Activated CD8-positive, alpha-beta memory T cell treated with anti-CD3 and anti-CD28 coated beads, Interleukin-2, amount 10 ng/mL, durations not matched to agents 7 days and 5 days (primary cell): ENCODE measurements at regions of chr9 and their contacts with region 1.

Region 1: DNA sequence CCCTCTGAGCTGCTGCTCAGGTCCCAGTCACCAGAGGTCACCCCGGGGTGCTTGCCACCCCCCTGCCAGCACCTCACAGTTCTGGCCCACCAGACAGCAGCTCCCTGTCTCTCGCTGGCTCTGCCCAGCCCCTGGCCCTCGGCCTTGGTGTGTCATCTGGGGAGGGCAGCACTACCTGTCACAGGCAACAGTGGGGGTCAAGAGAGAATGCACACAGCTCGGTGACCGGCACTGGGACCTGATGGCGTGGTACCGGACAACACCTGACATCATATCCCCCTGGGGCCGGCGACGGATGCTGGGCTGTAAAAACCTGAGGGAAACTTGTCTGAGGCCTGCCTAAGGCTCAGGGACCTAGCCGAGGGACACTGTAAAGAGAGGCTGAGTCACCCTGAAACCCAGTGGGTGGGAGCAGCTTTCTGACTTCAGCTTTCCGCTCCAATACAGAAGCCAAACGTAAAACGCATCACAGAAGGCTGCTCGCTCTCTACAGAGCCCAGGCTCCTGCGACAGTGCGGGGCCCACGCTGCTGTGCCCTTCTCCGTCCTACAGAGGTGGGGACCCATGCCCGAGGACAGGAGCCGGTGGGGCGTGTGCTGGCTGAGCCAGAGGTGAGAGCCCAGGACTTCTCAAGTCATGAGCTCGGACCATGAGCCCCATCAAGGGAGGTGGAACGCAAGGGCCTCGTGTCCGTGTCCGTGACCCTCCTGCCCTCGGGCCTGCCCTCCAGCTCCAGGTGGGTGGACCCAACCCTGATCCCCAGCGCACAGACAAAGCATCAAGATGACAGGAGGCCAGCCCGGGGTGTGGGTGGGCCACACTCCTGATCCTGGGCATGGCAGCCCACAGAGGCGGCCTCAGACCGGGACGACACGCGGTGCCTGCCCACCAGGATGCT is 5.3 kb downstream of the RALGDS start:
- DNase-seq: peak; percentile 89
- ATAC-seq: peak; percentile 95
- H3K4me3 Mint-ChIP-seq: peak overlapping the region; percentile 47
- H3K27ac Mint-ChIP-seq: peak overlapping the region; percentile 90
- H3K4me1 Mint-ChIP-seq: peaks cover 72% of the 10 kb centered on the region
- H3K27me3 Mint-ChIP-seq: no peaks in the 10 kb centered on the region

Region 2: GRCh38 chr9:133067821-133068220 is 47.9 kb before region 1 on chr9:
- CTCF ChIA-PET with region 1: no interaction called
- DNase-seq: no peak
- ATAC-seq: no peak
- H3K4me3 Mint-ChIP-seq: no peak overlapping the region
- H3K27ac Mint-ChIP-seq: no peak overlapping the region
- H3K4me1 Mint-ChIP-seq: peaks cover 4% of the 10 kb centered on the region
- H3K27me3 Mint-ChIP-seq: no peaks in the 10 kb centered on the region

Region 3: DNA sequence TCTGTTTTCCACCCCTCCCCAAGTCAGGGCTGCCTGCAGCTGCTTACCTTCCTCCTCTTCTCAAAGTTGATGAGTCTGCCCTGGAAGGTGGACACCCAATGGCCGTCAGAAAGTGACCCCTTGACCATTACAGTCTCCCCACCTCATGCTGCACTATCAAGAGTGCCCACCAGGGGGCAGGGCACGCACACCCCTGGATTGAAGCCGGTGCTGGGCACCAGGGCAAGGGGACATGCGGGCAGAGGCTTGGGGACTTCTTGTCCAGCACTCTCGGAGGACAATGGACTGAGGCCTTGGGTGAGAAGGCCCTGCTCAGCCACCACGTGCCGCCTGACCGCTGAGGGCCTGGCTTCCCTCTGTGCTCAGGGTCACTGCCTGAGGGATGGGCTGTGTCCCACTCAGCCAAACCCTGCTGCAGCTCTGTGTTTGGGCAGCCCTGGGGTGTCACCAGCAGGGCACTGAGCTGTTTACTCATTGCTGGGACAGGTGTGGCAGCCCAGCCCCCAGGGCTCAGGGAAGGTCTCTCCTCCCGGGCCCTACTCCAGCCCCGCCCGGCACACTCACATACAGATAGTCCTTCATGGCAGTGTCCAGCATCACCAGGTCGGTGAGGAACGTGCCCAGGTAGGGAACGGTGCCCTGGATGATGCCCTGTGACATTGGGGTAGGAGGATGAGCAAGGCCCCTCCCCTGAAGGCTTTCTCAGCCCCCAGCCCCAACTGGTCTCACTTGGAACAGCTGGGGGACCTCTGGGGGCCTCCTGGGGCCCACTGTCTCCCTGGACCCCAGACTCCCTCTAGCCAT is 12.3 kb before region 1 on chr9:
- CTCF ChIA-PET with region 1: interaction called, 29 read pairs
- DNase-seq: peak; percentile 64
- ATAC-seq: peak; percentile 67
- H3K4me3 Mint-ChIP-seq: no peak overlapping the region
- H3K27ac Mint-ChIP-seq: peak overlapping the region; percentile 71
- H3K4me1 Mint-ChIP-seq: no peaks in the 10 kb centered on the region
- H3K27me3 Mint-ChIP-seq: no peaks in the 10 kb centered on the region

Region 4: GRCh38 chr9:133199648-133200321 is 84.1 kb after region 1 on chr9:
- CTCF ChIA-PET with region 1: no interaction called
- DNase-seq: peak; percentile 49
- ATAC-seq: peak; percentile 68
- H3K4me3 Mint-ChIP-seq: peak overlapping the region; percentile 60
- H3K27ac Mint-ChIP-seq: no peak overlapping the region
- H3K4me1 Mint-ChIP-seq: peaks cover 6% of the 10 kb centered on the region
- H3K27me3 Mint-ChIP-seq: peaks cover 20% of the 10 kb centered on the region